PC-3 (cell line): ENCODE measurements at regions of chr2 and their contacts with region 1.

Region 1: GRCh38 chr2:2846332-2847208 is 515.5 kb upstream of the MYT1L start:
- DNase-seq: peak; percentile 41
- ATAC-seq: peak; percentile 31; the same call in 1 of the 2 replicates
- H3K4me3 ChIP-seq: no peak overlapping the region
- H3K27ac ChIP-seq: no peak overlapping the region
- H3K4me1 ChIP-seq: no peaks in the 10 kb centered on the region
- H3K27me3 ChIP-seq: peaks cover 12% of the 10 kb centered on the region; the same call in 1 of the 2 replicates
- CTCF ChIP-seq: no peak

Region 2: GRCh38 chr2:2187196-2187595 is 659.4 kb before region 1 on chr2:
- CTCF ChIA-PET with region 1: no interaction called
- POLR2A ChIA-PET with region 1: no interaction called
- intact Hi-C with region 1: no loop called
- DNase-seq: no peak
- ATAC-seq: no peak
- H3K4me3 ChIP-seq: no peak overlapping the region
- H3K27ac ChIP-seq: no peak overlapping the region
- H3K4me1 ChIP-seq: no peaks in the 10 kb centered on the region
- H3K27me3 ChIP-seq: peaks cover 29% of the 10 kb centered on the region
- CTCF ChIP-seq: no peak

Region 3: GRCh38 chr2:2769481-2770431 is 76.8 kb before region 1 on chr2:
- CTCF ChIA-PET with region 1: no interaction called
- POLR2A ChIA-PET with region 1: no interaction called
- intact Hi-C with region 1: no loop called
- DNase-seq: no peak
- ATAC-seq: no peak
- H3K4me3 ChIP-seq: no peak overlapping the region
- H3K27ac ChIP-seq: no peak overlapping the region
- H3K4me1 ChIP-seq: no peaks in the 10 kb centered on the region
- H3K27me3 ChIP-seq: no peaks in the 10 kb centered on the region
- CTCF ChIP-seq: no peak

Region 4: DNA sequence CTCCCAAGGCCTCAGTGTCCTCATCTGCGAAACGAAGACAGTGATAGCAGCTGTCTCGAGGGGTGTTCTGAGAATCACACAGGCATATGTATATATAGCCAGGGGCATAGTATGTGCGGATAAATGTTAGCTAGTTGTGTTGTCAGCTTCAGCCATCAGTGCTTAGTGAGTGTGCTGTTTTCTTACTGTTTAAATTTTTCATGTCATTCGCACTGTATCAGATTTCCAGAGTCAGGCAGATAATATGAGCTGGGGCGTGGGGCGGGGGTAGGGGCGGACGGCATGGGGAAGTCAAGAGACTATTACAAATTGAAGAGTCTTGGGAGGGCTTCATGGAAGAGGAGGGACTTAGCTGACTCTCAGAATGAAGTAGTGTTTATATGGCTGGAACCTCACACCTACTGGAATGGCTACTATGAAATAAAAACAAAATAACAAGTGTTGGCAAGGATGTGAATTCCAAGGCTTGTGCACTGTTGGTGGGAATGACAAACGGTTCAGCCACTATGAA is 539.9 kb after region 1 on chr2:
- CTCF ChIA-PET with region 1: interaction called, 13 read pairs
- POLR2A ChIA-PET with region 1: no interaction called
- intact Hi-C with region 1: no loop called
- DNase-seq: no peak
- ATAC-seq: no peak
- H3K4me3 ChIP-seq: no peak overlapping the region
- H3K27ac ChIP-seq: no peak overlapping the region
- H3K4me1 ChIP-seq: no peaks in the 10 kb centered on the region
- H3K27me3 ChIP-seq: no peaks in the 10 kb centered on the region
- CTCF ChIP-seq: no peak